OCI-LY7 (cell line): ENCODE measurements at regions of chr9 and their contacts with region 1.

Region 1: DNA sequence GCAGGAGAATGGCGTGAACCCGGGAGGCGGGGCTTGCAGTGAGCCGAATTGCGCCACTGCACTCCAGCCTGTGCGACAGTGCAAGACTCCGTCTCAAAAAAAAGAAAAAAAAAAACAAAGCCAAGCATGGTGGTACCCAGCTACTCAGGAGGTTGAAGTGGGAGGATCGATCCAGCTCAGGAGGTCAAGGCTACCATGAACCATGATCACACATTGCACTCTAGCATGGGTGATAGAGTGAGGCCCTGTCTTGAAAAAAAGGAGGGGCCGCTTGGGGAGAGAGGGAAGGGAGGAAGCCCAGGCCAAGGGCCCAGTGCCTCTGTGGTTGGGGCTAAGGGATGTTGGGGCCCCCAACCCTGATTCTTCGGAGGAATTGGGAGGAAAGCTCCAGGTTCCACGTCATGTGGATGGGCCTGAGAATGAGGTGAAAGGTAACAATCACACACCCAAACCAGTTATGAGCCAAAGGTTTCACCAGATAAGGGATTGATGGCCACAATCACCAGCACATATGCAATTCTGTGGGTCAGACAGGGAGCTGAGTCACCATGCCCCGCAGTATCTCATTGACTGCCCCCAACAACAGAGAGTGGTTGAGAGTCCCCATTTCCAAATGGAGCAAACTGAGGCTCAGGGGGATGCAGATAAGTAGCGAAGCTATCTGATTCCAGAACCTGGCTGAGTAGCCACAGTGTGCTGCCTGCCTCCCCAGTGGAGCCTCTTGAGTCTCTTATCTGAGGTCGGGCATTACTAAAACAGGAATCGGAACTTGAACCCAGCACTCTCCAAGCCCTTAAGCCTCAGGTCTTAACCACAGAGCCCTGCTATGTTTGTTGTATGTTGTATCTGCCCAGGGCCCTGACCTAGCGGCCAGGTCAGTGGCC is 20.5 kb downstream of the SWI5 start:
- DNase-seq: no peak
- H3K4me3 ChIP-seq: no peak overlapping the region
- H3K27ac ChIP-seq: no peak overlapping the region
- H3K4me1 ChIP-seq: peaks cover 8% of the 10 kb centered on the region
- CTCF ChIP-seq: no peak

Region 2: DNA sequence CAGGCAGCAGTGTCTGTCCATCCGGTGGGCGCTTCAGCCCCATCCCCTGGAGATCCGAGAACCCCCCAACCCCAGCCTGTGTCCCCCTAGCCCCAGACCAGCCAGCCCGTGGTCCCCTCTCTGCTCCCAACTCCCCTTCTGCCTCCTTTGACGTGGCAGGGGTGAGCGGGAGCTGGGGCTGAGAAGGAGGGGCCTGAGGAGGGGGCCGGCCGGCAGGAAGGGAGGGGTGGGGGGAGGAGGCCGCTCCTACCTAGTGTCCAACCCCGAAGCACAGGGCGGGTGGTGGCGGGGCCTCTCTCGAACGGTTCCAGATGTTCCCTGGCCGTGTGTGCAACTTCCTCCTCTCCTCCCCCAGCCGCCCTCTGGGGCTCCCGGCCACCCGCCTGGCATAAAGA is 51.7 kb before region 1 on chr9:
- CTCF ChIA-PET with region 1: interaction called, 12 read pairs
- POLR2A ChIA-PET with region 1: no interaction called
- intact Hi-C with region 1: no loop called
- DNase-seq: peak; percentile 65
- H3K4me3 ChIP-seq: no peak overlapping the region
- H3K27ac ChIP-seq: no peak overlapping the region
- H3K4me1 ChIP-seq: peaks cover 19% of the 10 kb centered on the region
- CTCF ChIP-seq: no peak

Region 3: GRCh38 chr9:128339771-128340690 is 43.5 kb after region 1 on chr9 and contains the start of gene SLC27A4:
- CTCF ChIA-PET with region 1: interaction called, 3 read pairs
- POLR2A ChIA-PET with region 1: no interaction called
- intact Hi-C with region 1: loop called (anchors 1 kb)
- DNase-seq: peak; percentile 88
- H3K4me3 ChIP-seq: peak within 1 kb of the TSS; percentile 82
- H3K27ac ChIP-seq: peak within 1 kb of the TSS; percentile 18
- H3K4me1 ChIP-seq: peaks cover 5% of the 10 kb centered on the region
- CTCF ChIP-seq: no peak
- total RNA-seq, gene SLC27A4: 12.3 and 14.2 TPM in 2 replicates

Region 4: DNA sequence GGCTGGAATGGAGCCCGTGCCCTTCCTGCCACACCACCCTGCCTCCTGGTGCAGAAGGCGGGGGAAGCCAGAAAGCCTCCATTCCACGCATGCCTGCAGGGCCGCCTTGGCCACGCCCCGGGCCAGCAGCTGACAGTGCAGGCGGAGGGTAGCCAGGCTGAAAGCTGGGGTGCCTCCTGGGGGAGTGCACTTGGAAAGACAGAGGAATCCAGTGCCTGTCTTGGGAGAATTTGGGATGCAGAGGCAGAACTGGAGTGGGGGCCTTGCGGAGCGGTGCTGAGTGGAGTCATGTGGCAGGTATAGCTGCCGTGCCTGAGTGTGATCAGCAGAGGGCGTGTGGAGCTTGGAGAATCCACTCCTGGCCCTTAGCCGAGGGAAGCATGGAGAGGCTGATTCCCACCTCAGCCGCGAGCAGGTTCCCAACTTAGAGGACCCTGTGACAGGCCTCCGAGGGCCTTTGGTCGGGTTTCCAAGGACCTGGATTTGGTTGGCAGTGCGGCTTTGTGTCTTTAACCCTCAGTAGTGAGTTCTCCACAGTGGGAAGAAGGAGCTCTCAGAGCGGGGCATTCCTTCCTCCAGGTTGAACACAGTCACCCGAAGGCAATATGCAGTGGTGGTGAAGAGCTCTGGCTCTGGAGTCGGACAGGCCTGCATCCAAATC is 65.5 kb after region 1 on chr9:
- CTCF ChIA-PET with region 1: interaction called, 11 read pairs
- POLR2A ChIA-PET with region 1: interaction called, 4 read pairs
- intact Hi-C with region 1: no loop called
- DNase-seq: peak; percentile 73
- H3K4me3 ChIP-seq: no peak overlapping the region
- H3K27ac ChIP-seq: no peak overlapping the region
- H3K4me1 ChIP-seq: no peaks in the 10 kb centered on the region
- CTCF ChIP-seq: peak; percentile 89

Region 5: DNA sequence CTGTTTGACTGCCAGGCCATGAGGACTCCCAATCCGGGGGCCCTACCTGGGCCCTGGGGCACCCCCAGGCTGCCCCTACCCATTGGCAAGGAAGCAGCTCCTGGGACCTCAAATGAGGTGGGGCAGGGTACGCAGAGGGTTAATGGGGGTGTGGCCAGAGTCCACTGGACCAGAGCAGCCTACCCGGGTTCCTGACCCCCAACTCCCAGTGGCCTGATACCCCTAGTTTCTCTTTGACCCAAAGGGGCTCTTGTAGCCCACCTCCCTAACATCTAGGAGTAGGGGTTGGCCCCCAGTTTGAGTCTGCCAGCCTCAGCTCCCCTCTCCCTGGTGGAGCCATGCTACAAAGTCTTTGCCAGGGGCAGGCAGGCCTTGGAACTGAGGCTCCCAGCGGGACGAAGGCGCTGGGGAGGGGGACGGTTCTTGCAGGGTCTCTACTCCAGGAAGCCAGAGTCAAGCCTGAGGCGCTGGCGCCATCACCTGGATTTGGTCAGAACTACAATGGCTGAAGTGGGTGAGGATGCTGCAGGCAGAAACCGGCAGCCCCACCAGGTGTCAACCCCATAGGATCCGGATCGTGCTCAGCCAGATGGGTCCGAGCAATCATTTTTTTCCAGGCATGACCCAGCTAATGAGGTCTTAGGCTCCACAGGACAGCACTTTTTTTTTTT is 115.7 kb after region 1 on chr9:
- CTCF ChIA-PET with region 1: no interaction called
- POLR2A ChIA-PET with region 1: no interaction called
- intact Hi-C with region 1: loop called (anchors 2 kb)
- DNase-seq: peak; percentile 67
- H3K4me3 ChIP-seq: no peak overlapping the region
- H3K27ac ChIP-seq: no peak overlapping the region
- H3K4me1 ChIP-seq: peaks cover 10% of the 10 kb centered on the region
- CTCF ChIP-seq: peak; percentile 85